HEK293 (cell line): ENCODE measurements at regions of chr19 and their contacts with region 1.

Region 1: GRCh38 chr19:46392243-46392801 is 21.0 kb downstream of the CCDC8 start:
- H3K4me3 ChIP-seq: no peak overlapping the region
- H3K27ac ChIP-seq: no peak overlapping the region
- H3K4me1 ChIP-seq: no peaks in the 10 kb centered on the region
- CTCF ChIP-seq: no peak

Region 2: DNA sequence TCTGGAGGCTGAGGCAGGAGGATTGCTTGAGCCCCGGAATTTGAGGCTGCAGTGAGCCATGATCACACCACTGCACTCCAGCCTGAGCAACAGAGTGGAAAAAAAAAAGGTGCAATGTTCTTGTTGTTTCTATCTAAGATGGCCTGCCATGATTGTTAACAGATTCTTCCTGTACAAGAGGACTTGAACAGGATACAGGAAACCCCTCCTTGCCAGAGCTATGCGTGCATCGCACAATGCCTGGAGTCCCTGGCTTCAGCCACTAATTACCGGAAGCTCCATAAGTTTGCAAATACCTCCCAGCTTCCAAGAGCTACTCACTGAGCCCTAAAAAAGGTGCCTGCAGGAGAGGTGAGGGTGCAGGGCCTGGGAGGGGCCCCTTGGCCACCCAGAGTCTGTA is 108.6 kb before region 1 on chr19:
- CTCF ChIA-PET with region 1: interaction called, 75 read pairs
- POLR2A ChIA-PET with region 1: no interaction called
- H3K4me3 ChIP-seq: no peak overlapping the region
- H3K27ac ChIP-seq: no peak overlapping the region
- H3K4me1 ChIP-seq: no peaks in the 10 kb centered on the region
- CTCF ChIP-seq: no peak

Region 3: DNA sequence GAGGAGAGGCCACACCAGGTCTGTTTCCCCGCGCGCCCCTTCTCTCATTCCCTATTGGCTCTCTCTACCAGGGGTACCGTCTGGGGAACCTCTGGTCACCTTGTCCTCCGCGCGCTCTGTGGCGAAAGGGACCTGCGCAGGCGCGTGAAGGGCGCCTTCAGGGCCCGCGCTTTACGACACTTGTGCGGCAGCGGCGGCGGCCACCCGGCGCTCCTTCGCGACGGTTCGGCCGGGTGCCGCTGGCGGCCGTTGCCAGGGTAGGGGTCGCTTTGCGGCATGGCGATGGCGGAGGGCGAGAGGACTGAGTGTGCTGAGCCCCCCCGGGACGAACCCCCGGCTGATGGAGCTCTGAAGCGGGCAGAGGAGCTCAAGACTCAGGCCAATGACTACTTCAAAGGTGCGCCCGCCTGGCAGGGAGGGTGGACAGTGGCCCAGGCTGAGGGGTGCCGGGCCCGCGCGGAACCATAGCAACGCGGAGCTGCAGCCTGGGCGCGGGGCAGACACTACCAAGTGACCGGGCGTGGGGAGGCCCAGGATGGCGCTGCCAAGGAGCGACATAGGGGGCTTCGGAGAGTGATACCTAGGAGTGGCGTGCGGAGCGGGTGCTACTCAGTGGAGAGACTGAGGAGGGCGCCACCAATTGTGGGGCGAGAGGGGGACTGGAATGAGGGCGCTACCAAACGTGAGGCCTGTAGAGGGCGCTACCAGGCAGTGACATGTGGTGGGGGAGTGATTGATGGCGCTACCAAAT is 45.3 kb before region 1 on chr19 and contains the start of gene PPP5C:
- CTCF ChIA-PET with region 1: interaction called, 16 read pairs
- POLR2A ChIA-PET with region 1: interaction called, 8 read pairs
- H3K4me3 ChIP-seq: peak within 1 kb of the TSS; percentile 98
- H3K27ac ChIP-seq: peak within 1 kb of the TSS; percentile 93
- H3K4me1 ChIP-seq: peaks cover 19% of the 10 kb centered on the region
- CTCF ChIP-seq: peak; percentile 100

Region 4: DNA sequence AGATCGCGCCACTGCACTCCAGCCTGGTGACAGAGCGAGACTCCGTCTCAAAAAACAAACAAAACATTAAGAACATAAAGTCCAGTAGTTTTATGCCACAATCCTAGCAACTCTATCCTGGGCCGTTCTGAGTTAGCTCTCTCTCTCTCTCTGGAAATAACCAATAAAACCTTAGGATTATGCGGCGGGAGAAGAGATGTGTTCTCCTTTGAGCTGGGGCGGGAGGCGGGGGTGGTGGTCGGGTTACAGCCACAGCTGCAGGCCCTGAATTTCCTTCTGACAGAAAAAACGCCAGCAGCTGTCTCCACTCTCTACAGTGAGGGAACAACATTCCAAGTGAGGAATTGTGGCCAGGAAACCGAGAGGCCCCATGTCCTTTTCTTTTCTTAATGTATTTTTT is 88.1 kb after region 1 on chr19:
- CTCF ChIA-PET with region 1: interaction called, 51 read pairs
- POLR2A ChIA-PET with region 1: no interaction called
- H3K4me3 ChIP-seq: no peak overlapping the region
- H3K27ac ChIP-seq: no peak overlapping the region
- H3K4me1 ChIP-seq: peaks cover 6% of the 10 kb centered on the region
- CTCF ChIP-seq: no peak

Region 5: DNA sequence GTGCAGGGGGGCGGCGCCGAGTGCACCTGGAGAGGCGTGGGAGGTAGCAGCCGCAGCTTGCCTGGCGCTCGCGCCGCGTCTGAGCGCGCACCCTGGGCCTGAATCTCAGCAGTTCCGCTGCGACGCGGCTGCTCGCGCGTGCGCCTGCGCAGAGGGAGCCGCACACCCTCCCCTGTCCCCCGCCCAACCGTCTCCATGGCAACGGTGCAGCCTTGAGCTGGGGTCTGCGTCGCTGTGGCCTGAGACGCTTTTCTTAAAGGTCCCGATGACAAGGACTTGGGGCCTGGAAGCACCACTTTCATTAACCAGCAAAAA is 103.4 kb after region 1 on chr19 and contains the start of gene PNMA8B:
- CTCF ChIA-PET with region 1: interaction called, 16 read pairs
- POLR2A ChIA-PET with region 1: interaction called, 3 read pairs
- H3K4me3 ChIP-seq: peak within 1 kb of the TSS; percentile 30
- H3K27ac ChIP-seq: no peak within 1 kb of the TSS
- H3K4me1 ChIP-seq: 0 out of 2 replicates have a peak, but pooled peaks cover 3% of the 10 kb centered on the region
- CTCF ChIP-seq: no peak

Region 6: GRCh38 chr19:46513461-46514236 is 121.3 kb after region 1 on chr19:
- CTCF ChIA-PET with region 1: interaction called, 65 read pairs
- POLR2A ChIA-PET with region 1: no interaction called
- H3K4me3 ChIP-seq: no peak overlapping the region
- H3K27ac ChIP-seq: no peak overlapping the region
- H3K4me1 ChIP-seq: no peaks in the 10 kb centered on the region
- CTCF ChIP-seq: peak; percentile 88

Region 7: DNA sequence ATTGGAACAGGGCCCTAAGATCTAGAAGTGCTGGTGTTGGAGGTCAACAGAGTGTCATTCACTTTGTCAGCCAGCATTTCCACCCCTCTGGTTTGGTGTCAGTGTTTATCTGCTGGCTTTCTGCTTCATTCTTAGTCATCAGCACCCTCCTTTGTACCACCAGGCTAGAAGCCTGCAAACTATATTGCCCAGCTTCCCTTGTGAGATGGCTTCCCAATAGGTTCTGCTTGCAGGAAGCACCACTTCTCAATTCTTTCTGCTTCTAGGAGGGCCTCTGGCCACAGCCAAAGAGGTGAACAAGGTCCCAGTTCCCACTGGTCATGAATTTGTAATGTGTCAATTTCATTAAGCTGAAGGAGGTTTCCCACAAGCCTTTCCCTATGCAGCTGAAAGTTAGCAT is 172.4 kb after region 1 on chr19:
- CTCF ChIA-PET with region 1: no interaction called
- POLR2A ChIA-PET with region 1: no interaction called
- H3K4me3 ChIP-seq: no peak overlapping the region
- H3K27ac ChIP-seq: no peak overlapping the region
- H3K4me1 ChIP-seq: no peaks in the 10 kb centered on the region
- CTCF ChIP-seq: no peak